ENCODE measurements at regions of chr2 and their contacts with region 1.

Region 1: GRCh38 chr2:30136764-30137444 is 9.9 kb upstream of the YPEL5 start:
- DNase-seq: no peak
- ATAC-seq: no peak
- H3K4me3 ChIP-seq: no peak overlapping the region
- H3K27ac ChIP-seq: no peak overlapping the region
- H3K4me1 ChIP-seq: peaks cover 0 to 4% (median 0%) of the 10 kb centered on the region in 12 donors
- H3K27me3 ChIP-seq: peaks cover 0 to 8% (median 0%) of the 10 kb centered on the region in 9 donors
- CTCF ChIP-seq: no peak
- POLR2A ChIP-seq: no peak

Region 2: GRCh38 chr2:29767674-29768335 is 369.1 kb before region 1 on chr2:
- intact Hi-C with region 1: no loop called
- DNase-seq: no peak
- ATAC-seq: no peak
- H3K4me3 ChIP-seq: no peak overlapping the region
- H3K27ac ChIP-seq: no peak overlapping the region
- H3K4me1 ChIP-seq: no peaks in the 10 kb centered on the region
- H3K27me3 ChIP-seq: peaks cover 0 to 5% (median 0%) of the 10 kb centered on the region in 9 donors
- CTCF ChIP-seq: no peak
- POLR2A ChIP-seq: no peak

Region 3: GRCh38 chr2:30157616-30158015 is 20.7 kb after region 1 on chr2:
- intact Hi-C with region 1: loop called in 1 of 10 experiments (anchors 2 kb)
- DNase-seq: no peak
- ATAC-seq: peak in 2 of 4 donors; percentile 34 to 36
- H3K4me3 ChIP-seq: no peak overlapping the region
- H3K27ac ChIP-seq: peak overlapping the region in 1 of 12 donors; percentile 7
- H3K4me1 ChIP-seq: peaks cover 0 to 35% (median 8%) of the 10 kb centered on the region in 12 donors
- H3K27me3 ChIP-seq: no peaks in the 10 kb centered on the region
- CTCF ChIP-seq: no peak
- POLR2A ChIP-seq: no peak